Stomach (tissue), 19 donors: ENCODE measurements at regions of chr20 and their contacts with region 1.

Region 1: GRCh38 chr20:4014031-4014474 is 1.3 kb downstream of the RNF24 start:
- DNase-seq: peak; percentile 68 to 89
- H3K4me3 ChIP-seq: peak overlapping the region in 3 of 4 donors; percentile 68 to 92 (median 90)
- H3K27ac ChIP-seq: peak overlapping the region; percentile 28 to 93 (median 81)
- H3K4me1 ChIP-seq: peaks cover 16 to 65% (median 31%) of the 10 kb centered on the region in 4 donors
- H3K27me3 ChIP-seq: no peaks in the 10 kb centered on the region
- CTCF ChIP-seq: peak in 5 of 7 experiments; percentile 19 to 63 (median 37)
- EP300 ChIP-seq: no peak
- POLR2A ChIP-seq: no peak

Region 2: DNA sequence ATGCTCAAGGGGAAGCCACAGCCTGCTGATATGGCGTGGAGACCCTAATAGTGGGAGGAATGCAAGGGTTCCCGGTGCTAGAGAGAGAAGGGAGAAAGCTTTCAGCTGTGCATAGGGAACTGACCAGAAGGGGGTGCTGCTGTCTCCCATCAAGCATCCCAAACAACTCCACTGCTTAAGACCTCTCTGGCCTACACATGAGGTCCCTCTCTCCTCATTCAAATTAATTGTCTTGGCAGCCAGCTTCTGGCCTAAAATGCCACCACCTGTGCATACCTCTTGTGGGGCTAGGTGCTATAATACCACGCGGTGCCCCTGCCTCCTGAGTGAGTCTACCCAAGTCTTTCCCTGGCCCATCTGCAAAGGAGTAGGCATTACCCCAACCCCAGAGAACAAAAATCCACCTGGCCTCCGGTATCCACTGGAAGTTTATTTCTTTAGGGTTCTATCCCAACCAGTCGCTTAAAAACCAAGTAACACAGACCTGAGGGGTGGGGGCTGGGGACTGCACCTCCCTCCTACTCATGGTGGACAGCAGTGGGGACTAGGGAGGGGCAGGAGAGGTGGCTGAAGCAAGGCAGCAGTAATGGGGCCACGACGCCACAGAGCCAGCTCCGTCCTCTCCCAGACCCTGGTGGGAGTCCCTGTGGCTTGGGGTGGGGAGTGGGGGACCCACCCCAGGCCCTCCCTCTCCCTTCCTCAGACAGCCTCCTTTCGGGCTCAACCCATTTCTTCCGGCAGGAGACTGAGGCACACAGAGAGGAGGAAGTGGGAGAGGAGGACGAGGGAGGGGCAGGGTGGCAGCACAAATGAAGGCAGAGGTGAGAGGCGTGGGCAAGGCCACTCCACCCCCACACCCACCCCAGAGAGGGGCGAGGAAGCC is 260.7 kb before region 1 on chr20:
- intact Hi-C with region 1: no loop called
- DNase-seq: peak; percentile 70 to 90
- H3K4me3 ChIP-seq: no peak overlapping the region
- H3K27ac ChIP-seq: peak overlapping the region in 1 of 5 donors; percentile 46
- H3K4me1 ChIP-seq: peaks cover 16 to 50% (median 29%) of the 10 kb centered on the region in 4 donors
- H3K27me3 ChIP-seq: peaks cover 0 to 22% (median 13%) of the 10 kb centered on the region in 3 donors
- CTCF ChIP-seq: peak in 5 of 7 experiments; percentile 57 to 75 (median 69)
- EP300 ChIP-seq: no peak
- POLR2A ChIP-seq: no peak

Region 3: DNA sequence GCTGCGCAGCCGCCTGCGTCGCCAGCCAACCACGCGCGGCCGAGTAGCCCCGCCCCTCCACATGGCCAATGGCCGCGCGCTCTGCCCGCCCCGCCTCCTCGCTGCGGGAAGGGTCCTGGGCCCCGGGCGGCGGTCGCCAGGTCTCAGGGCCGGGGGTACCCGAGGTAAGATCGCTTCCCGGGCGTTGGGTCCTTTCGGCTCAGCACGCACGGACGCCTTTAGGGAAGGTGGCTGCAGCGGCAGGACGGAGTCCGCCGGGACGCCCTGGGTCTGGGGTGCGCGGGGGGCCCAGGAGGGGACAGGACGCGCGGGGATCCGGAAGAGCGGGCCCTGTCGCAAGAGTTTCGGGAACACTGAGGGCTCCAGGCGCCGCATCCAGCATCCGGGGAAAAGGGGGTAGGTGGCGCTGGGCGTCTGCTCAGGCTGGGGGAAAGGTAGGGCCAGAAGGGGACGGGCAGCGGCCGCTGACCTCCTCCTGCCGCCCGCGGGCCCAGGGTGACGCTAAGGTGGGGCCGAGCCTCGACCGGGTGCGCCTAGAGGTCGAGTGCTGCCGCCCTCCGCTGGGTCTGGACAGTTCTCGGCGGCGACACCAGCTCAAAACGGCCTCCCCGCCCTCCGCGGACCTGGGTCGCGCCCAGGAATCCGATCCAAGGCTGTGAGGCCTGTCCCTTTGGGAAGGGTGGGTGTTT is 167.2 kb before region 1 on chr20 and contains the start of gene MAVS:
- intact Hi-C with region 1: no loop called
- DNase-seq: peak; percentile 92 to 97
- H3K4me3 ChIP-seq: peak within 1 kb of the TSS; percentile 78 to 94 (median 90)
- H3K27ac ChIP-seq: peak within 1 kb of the TSS; percentile 94 to 95 (median 94)
- H3K4me1 ChIP-seq: peaks cover 10 to 45% (median 40%) of the 10 kb centered on the region in 4 donors
- H3K27me3 ChIP-seq: no peaks in the 10 kb centered on the region
- CTCF ChIP-seq: no peak
- EP300 ChIP-seq: no peak
- POLR2A ChIP-seq: no peak
- total RNA-seq, gene MAVS: 26.6 to 50.4 (median 37.1) TPM

Region 4: GRCh38 chr20:4082406-4083097 is 68.5 kb after region 1 on chr20:
- intact Hi-C with region 1: loop called (anchors 10 kb)
- DNase-seq: peak in 1 of 2 donors; percentile 85
- H3K4me3 ChIP-seq: no peak overlapping the region
- H3K27ac ChIP-seq: peak overlapping the region in 3 of 5 donors; percentile 45 to 79 (median 58)
- H3K4me1 ChIP-seq: peaks cover 6 to 41% (median 17%) of the 10 kb centered on the region in 4 donors
- H3K27me3 ChIP-seq: no peaks in the 10 kb centered on the region
- CTCF ChIP-seq: no peak
- EP300 ChIP-seq: no peak
- POLR2A ChIP-seq: no peak